A549 (cell line): ENCODE measurements at regions of chr7 and their contacts with region 1.

Region 1: DNA sequence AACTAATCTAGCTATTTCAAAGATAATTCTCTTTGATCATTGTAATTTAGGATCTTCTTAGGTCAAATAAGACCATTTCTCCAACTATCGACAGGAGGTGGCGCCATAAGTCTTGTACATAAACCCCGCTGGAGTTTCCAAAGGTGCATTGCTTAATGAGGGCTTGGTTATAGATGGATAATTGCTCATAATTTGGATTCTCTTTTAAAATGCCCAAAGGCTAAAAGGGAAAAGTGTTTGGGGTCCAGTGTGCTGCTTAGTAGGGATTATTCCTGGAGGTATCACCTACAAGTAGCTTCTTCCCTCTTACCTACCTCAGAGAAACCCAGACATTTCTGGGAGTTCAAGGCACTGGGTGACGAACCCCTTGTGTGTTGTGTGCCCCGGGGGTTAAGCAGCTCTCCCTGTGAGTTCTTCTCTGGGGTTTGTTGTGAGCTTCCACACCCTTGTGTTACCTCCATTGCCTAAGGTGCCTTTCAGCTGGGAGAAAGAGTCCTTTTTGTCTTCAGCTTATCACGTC is 75.2 kb downstream of the PAXIP1 start:
- DNase-seq: peak; percentile 66 to 91
- ATAC-seq: peak; percentile 72 to 82
- H3K4me3 ChIP-seq: peak overlapping the region; percentile 67
- H3K27ac ChIP-seq: peak overlapping the region; percentile 43 to 74; a peak in 5 of 6 replicates
- H3K4me1 ChIP-seq: 0 out of 3 replicates have a peak, but pooled peaks cover 4% of the 10 kb centered on the region
- CTCF ChIP-seq: peak; percentile 92
- EP300 ChIP-seq: no peak
- POLR2A ChIP-seq: no peak
- RAD21 ChIP-seq: peak; percentile 86 to 89

Region 2: GRCh38 chr7:154942691-154943090 is 15.0 kb after region 1 on chr7:
- CTCF ChIA-PET with region 1: interaction called, 34 read pairs
- POLR2A ChIA-PET with region 1: no interaction called
- DNase-seq: no peak
- ATAC-seq: no peak
- H3K4me3 ChIP-seq: no peak overlapping the region
- H3K27ac ChIP-seq: no peak overlapping the region
- H3K4me1 ChIP-seq: no peaks in the 10 kb centered on the region
- CTCF ChIP-seq: no peak
- EP300 ChIP-seq: no peak
- POLR2A ChIP-seq: no peak
- RAD21 ChIP-seq: no peak

Region 3: DNA sequence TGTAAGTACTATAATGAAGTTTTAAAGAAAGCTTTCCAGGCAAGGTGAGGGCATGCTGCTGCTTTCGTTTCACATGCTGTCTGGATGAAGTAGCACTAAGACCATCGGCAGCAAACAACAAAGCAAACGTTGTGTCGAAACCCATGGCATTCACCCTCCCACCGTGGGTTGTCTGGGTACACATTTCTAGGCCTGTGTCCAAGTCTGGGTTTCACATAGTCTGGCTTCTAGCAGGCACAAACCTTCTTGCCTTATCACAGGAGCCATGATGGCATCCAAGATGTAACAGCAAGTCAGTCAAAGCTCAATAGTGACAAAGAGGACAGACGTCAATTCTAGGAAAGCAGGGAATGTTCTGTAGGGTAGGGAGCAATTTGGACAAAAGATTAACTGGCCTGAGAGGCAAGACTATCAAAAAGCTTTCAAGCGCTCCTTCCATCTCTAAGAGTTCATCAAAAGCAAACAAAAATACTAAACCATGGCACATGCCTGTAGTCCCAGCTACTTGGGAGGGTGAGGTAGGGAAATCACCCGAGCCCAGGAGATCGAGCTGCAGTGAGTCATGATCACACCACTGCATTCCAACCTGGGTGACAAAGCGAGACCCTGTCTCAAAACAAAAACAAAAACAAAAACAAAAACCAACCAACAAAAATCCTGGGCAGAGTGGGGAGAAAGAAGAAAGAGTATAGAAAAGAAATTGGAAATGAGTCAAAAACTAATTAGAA is 32.5 kb after region 1 on chr7:
- CTCF ChIA-PET with region 1: interaction called, 12 read pairs
- POLR2A ChIA-PET with region 1: no interaction called
- DNase-seq: peak in 1 of 2 experiments; percentile 12
- ATAC-seq: no peak
- H3K4me3 ChIP-seq: no peak overlapping the region
- H3K27ac ChIP-seq: no peak overlapping the region
- H3K4me1 ChIP-seq: no peaks in the 10 kb centered on the region
- CTCF ChIP-seq: no peak
- EP300 ChIP-seq: no peak
- POLR2A ChIP-seq: no peak
- RAD21 ChIP-seq: no peak

Region 4: GRCh38 chr7:155190688-155191087 is 263.0 kb after region 1 on chr7:
- CTCF ChIA-PET with region 1: interaction called, 16 read pairs
- POLR2A ChIA-PET with region 1: no interaction called
- DNase-seq: peak; percentile 28 to 61
- ATAC-seq: peak; percentile 75 to 87; a peak in 5 of 6 replicates
- H3K4me3 ChIP-seq: peak overlapping the region; percentile 32; the same call in 1 of the 3 replicates
- H3K27ac ChIP-seq: no peak overlapping the region
- H3K4me1 ChIP-seq: no peaks in the 10 kb centered on the region
- CTCF ChIP-seq: peak; percentile 80
- EP300 ChIP-seq: no peak
- POLR2A ChIP-seq: no peak
- RAD21 ChIP-seq: peak; percentile 86 to 89

Region 5: DNA sequence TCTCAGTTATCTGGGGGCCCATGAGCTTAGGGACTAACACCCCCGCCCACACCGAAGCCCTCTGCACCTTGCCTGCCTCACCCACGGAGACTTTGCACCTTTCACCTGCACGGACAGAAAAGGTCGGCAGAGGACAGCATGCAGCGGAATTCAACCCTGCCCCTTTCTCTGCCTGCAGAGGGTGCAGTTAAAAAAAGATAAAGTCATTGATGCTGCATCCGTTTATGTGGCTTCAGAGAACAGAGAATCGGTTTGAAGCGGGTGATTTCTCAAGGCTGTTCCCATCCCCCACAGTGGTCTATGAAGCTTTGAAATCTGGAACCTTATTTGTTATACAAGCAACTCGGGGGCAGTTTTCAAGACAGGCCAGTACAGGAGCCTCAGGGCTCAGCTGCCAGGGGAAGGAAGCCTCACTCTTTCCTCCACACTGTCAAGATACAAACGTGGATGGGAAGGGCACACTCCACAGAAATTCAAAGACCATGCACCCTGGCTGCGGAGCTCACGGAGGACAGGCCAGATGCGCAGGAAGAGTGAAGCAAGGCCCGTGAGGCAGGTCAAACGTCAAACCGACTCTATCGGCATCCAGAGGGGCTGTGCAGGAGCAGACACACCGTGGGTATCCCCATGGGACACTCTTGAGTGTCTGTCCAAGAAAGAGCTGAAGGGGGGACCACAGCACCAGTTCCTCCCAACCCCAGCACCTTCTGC is 436.3 kb after region 1 on chr7:
- CTCF ChIA-PET with region 1: interaction called, 14 read pairs
- POLR2A ChIA-PET with region 1: interaction called, 3 read pairs
- DNase-seq: no peak
- ATAC-seq: 0 out of 6 replicates have a peak, but pooled peaks of 1 of the 2 experiments have one; percentile 19
- H3K4me3 ChIP-seq: no peak overlapping the region
- H3K27ac ChIP-seq: no peak overlapping the region
- H3K4me1 ChIP-seq: no peaks in the 10 kb centered on the region
- CTCF ChIP-seq: no peak
- EP300 ChIP-seq: no peak
- POLR2A ChIP-seq: no peak
- RAD21 ChIP-seq: no peak

Region 6: GRCh38 chr7:155380221-155380861 is 452.7 kb after region 1 on chr7:
- CTCF ChIA-PET with region 1: interaction called, 19 read pairs
- POLR2A ChIA-PET with region 1: no interaction called
- DNase-seq: peak; percentile 77 to 93
- ATAC-seq: peak; percentile 83 to 93
- H3K4me3 ChIP-seq: no peak overlapping the region
- H3K27ac ChIP-seq: no peak overlapping the region
- H3K4me1 ChIP-seq: peaks cover 5% of the 10 kb centered on the region; the same call in 1 of the 3 replicates
- CTCF ChIP-seq: peak; percentile 68
- EP300 ChIP-seq: no peak
- POLR2A ChIP-seq: no peak
- RAD21 ChIP-seq: peak; percentile 66 to 70